Cardiac septum (tissue), 1 donor: ENCODE measurements at regions of chr5 and their contacts with region 1.

Region 1: GRCh38 chr5:170225326-170226128 is 7.3 kb upstream of the C5orf58 start:
- DNase-seq: no peak

Region 2: GRCh38 chr5:170338933-170339779 is 113.6 kb after region 1 on chr5:
- intact Hi-C with region 1: loop called (anchors 5 kb)
- DNase-seq: peak; percentile 82

Region 3: DNA sequence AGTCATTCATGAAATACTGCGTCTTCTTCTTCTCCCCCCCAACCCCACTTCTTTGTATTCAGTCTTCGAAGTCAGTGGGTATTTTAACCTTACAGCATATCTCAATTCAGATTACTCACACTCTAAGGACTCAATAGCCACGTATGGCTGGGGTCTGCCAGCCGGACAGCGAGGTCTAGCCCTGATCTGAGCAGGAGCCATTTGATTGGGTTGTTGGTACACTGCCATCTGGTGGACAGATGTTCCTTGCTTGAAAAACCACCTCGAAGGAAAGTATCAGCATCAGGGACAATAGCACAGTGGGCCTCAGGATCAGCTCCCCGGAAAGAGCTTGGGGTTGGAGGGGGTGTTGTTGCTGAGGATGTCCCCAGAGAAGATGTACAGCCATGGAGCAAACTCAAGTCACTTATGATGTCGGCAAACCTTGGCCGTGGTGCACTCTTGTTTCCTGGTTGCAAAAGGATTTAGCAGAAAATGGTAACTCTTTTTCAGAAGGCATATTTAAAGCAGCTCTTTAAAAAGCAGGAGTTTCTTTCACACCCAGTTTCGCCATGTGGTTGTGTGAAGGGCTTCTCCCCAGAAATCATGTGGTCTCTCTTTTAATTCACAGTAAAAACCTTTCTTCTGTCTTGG is 195.4 kb after region 1 on chr5:
- intact Hi-C with region 1: loop called (anchors 2 kb)
- DNase-seq: no peak

Region 4: DNA sequence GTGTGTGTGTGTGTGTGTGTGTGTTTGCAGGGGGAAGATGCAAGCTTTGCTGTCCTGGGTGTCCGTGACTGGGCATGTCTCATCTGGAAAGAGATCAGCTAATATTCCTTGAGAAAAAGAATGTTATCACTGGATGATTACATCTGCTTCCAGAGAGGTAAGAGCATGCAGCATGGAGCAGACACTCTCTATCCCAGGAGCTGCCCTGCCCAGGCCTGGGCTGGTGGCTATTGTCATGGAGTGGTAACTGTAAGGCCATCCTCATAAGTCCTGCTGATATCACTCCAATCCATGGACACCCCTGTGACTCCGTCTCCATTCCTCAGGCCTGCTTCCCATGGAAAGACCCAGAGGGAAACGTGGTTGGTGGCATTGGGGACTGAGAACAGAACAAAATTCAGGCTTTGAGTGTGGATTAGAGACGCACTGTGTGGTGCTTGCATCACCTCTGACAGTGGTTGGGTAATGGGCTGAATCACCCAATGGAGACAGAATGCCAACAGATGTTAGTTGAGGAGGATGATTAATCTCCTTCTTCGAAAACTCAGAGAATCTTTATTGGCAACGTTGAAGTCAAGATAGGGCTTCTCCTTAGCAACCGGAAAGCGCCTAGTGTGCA is 226.3 kb after region 1 on chr5:
- intact Hi-C with region 1: no loop called
- DNase-seq: no peak